Activated CD8-positive, alpha-beta T cell treated with anti-CD3 and anti-CD28 coated beads for 36 hours (primary cell): ENCODE measurements at regions of chr6 and their contacts with region 1.

Region 1: DNA sequence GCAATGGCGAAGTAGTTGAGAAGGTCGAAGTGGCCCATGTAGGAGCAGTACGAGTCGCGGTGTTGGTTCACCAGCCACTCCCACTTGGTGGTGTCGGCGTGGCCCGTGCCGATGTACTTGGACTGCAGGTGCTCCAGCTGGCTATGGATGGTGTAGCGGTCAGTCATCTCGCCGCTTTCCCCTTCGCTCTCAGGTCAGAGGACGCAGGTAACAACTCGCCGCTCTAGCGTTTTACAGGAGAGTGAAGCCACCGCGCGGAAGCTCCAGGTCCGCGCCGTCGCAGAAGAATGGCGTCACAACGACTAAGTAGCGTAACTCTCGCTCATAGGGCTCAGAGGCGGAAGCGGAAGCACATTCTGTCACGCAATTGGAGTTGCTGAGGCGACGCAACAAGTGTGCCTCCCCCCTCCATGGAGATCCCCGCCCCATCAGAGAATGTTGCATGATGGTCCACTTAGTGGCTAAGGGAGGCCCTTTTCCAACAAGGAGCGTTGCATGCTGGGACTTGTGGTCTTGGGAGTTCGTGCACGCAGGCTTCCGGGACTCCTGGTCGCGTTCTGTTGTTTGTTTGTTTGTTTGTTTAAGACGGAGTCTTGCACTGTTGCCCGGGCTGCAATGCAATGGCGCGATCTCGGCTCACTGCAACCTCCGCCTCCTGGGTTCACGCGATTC is at the start of gene SF3B5:
- DNase-seq: peak; percentile 99
- ATAC-seq: peak; percentile 98
- H3K4me3 Mint-ChIP-seq: peak within 1 kb of the TSS; percentile 95
- H3K27ac Mint-ChIP-seq: peak within 1 kb of the TSS; percentile 98
- H3K4me1 Mint-ChIP-seq: peaks cover 21% of the 10 kb centered on the region
- H3K27me3 Mint-ChIP-seq: no peaks in the 10 kb centered on the region
- CTCF ChIP-seq: no peak
- total RNA-seq, gene SF3B5: 207 to 210 TPM

Region 2: DNA sequence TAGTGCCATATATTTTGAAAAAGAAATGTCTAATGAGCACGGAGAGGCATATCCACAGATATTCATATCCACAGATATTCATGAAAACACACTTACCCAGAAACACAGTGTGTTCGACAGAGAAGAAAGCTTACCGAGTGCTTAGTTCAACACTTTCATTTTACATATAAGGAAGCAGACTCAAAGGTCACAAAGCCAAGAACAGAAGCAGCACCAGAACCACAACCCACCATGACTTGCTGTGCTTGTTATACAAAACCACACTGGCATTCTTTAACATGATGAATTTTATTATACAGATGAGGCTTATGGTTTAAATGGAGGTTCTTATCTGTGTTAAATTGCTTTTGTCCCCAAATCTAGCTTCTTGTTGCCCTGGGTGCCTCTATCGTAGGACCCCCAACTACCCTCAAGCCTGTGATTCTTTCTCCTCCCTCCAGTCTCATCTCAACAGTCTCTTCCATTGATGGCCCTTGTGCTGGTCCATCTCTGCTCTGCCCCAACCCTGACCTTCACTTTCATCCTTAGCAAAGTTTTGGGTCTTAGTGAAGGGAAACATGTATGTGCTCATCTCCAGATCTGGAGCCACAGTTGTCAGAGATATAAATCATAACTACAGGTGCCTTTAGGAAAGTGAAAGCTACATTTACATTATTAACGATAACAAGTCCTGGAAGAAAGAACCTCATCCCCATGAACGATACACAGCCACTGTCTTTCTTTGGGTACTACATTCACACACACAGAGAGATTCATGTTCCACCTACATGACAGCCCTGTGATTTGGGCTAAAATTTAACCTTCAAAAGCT is 40.1 kb before region 1 on chr6:
- CTCF ChIA-PET with region 1: no interaction called
- POLR2A ChIA-PET with region 1: interaction called, 14 read pairs
- intact Hi-C with region 1: no loop called
- DNase-seq: peak; percentile 86
- ATAC-seq: peak; percentile 86
- H3K4me3 Mint-ChIP-seq: peak overlapping the region; percentile 69
- H3K27ac Mint-ChIP-seq: peak overlapping the region; percentile 95
- H3K4me1 Mint-ChIP-seq: peaks cover 27% of the 10 kb centered on the region
- H3K27me3 Mint-ChIP-seq: no peaks in the 10 kb centered on the region
- CTCF ChIP-seq: no peak

Region 3: DNA sequence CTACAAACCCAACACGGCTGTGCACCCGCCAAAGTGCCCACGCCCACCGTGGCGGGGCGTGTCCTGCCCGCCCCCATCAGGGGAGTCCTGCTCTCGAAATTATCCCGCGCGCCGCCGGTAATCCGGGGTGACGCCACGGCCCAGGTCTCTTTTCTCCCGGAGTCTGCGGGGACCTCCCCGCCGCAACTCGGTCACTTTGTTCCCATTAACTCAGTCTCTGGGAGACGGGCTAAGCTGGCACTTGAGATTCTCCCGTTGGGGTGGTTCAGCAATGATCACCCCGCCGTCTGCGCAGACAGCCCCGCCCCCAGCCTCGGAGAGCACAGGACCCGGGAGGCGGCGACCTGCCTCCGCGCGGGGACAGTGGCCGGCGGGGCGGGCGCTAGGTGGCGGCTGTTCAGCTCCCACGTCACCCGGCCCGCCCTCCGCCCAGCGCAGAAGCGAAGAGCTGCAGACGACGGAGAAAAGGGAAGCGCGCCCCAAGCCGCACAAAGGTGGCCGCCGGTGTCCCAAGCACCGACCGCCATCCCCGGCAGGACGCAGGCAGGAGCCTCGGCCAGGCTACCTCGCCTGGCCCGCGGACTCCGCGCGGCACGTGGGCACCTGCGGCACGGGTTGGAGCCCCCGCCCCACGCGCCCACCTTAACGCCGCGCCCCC is 31.6 kb before region 1 on chr6:
- CTCF ChIA-PET with region 1: interaction called, 7 read pairs
- POLR2A ChIA-PET with region 1: interaction called, 19 read pairs
- intact Hi-C with region 1: loop called (anchors 2 kb)
- DNase-seq: peak; percentile 93
- ATAC-seq: peak; percentile 92
- H3K4me3 Mint-ChIP-seq: peak overlapping the region; percentile 84
- H3K27ac Mint-ChIP-seq: peak overlapping the region; percentile 87
- H3K4me1 Mint-ChIP-seq: peaks cover 40% of the 10 kb centered on the region
- H3K27me3 Mint-ChIP-seq: no peaks in the 10 kb centered on the region
- CTCF ChIP-seq: no peak